ENCODE measurements at regions of chr1 and their contacts with region 1.

Region 1: GRCh38 chr1:110412576-110412975 is 5.1 kb upstream of the LAMTOR5 start:
- DNase-seq: peak; percentile 57 to 63
- ATAC-seq: peak; percentile 91
- H3K4me3 ChIP-seq: no peak overlapping the region
- H3K27ac ChIP-seq: peak overlapping the region in 1 of 2 experiments; percentile 58; a peak in 1 of 6 replicates
- H3K4me1 ChIP-seq: peaks cover 10% of the 10 kb centered on the region
- CTCF ChIP-seq: peak; percentile 75
- EP300 ChIP-seq: no peak
- POLR2A ChIP-seq: no peak
- RAD21 ChIP-seq: peak; percentile 82 to 86

Region 2: DNA sequence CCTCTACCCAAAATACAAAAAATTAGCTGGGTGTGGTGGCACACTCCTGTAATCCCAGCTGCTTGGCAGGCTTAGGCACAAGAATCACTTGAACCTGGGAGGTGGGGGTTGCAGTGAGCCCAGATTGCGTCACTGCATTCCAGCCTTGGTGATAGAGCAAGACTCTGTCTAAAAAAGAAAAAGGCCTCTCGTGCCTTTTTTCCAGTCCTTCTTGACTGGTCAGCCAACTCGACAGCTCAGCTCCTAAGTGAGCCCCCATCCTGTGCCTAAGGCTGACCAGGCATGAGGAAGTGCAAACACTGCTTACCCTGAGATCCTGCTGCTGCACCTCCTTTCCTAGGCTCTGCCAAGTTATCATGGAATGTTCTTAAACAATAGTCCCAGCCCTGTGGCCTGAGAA is 28.3 kb after region 1 on chr1:
- CTCF ChIA-PET with region 1: interaction called, 326 read pairs
- POLR2A ChIA-PET with region 1: no interaction called
- DNase-seq: no peak
- ATAC-seq: no peak
- H3K4me3 ChIP-seq: no peak overlapping the region
- H3K27ac ChIP-seq: no peak overlapping the region; a peak in 2 of 6 replicates
- H3K4me1 ChIP-seq: no peaks in the 10 kb centered on the region
- CTCF ChIP-seq: no peak
- EP300 ChIP-seq: no peak
- POLR2A ChIP-seq: no peak
- RAD21 ChIP-seq: no peak

Region 3: DNA sequence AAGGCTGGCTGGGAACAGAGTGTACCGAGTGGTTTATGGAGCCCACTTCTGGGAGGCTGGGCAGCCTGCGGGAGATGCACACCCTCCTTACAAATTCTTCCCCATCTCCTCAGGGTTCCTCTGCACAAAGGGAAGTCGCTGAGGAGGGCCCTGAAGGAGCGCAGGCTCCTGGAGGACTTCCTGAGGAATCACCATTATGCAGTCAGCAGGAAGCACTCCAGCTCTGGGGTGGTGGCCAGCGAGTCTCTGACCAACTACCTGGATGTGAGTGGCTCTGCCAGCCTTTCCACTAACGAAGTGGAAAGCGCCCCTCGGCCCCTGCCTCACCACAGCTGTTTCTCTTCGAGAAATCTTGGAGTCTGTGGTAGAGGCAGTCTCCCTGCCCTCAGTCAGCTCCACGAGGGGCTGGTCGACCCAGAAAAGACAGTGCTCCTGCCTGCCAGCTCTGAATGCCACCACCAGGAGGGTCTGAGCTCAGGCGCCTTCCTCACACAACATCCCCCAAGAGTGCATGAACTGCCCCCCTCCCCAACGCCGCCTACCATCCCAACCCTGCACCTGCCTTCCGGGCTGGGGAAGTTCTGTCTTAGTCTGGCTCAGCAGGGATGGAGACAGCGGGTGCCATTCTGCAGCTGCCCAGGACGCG is 70.2 kb after region 1 on chr1:
- CTCF ChIA-PET with region 1: interaction called, 11 read pairs
- POLR2A ChIA-PET with region 1: no interaction called
- DNase-seq: no peak
- ATAC-seq: no peak; a peak in 1 of 6 replicates
- H3K4me3 ChIP-seq: no peak overlapping the region
- H3K27ac ChIP-seq: no peak overlapping the region
- H3K4me1 ChIP-seq: peaks cover 16% of the 10 kb centered on the region
- CTCF ChIP-seq: no peak
- EP300 ChIP-seq: no peak
- POLR2A ChIP-seq: no peak
- RAD21 ChIP-seq: no peak

Region 4: GRCh38 chr1:110490791-110491451 is 78.3 kb after region 1 on chr1:
- CTCF ChIA-PET with region 1: interaction called, 146 read pairs
- POLR2A ChIA-PET with region 1: interaction called, 9 read pairs
- DNase-seq: no peak
- ATAC-seq: no peak
- H3K4me3 ChIP-seq: no peak overlapping the region
- H3K27ac ChIP-seq: no peak overlapping the region
- H3K4me1 ChIP-seq: peaks cover 6% of the 10 kb centered on the region; the same call in 1 of the 3 replicates
- CTCF ChIP-seq: no peak
- EP300 ChIP-seq: no peak
- POLR2A ChIP-seq: no peak
- RAD21 ChIP-seq: no peak

Measured in A549 (cell line).